Activated CD4-positive, alpha-beta memory T cell treated with anti-CD3 and anti-CD28 coated beads, Interleukin-2, amount 10 ng/mL, durations not matched to agents 7 days and 5 days (primary cell): ENCODE measurements at regions of chr7 and their contacts with region 1.

Region 1: GRCh38 chr7:149125863-149126661 is at the start of gene ZNF425:
- DNase-seq: peak; percentile 94
- H3K4me3 Mint-ChIP-seq: peak within 1 kb of the TSS; percentile 100
- H3K27ac Mint-ChIP-seq: peak within 1 kb of the TSS; percentile 99
- H3K4me1 Mint-ChIP-seq: peaks cover 24% of the 10 kb centered on the region
- H3K27me3 Mint-ChIP-seq: no peaks in the 10 kb centered on the region
- total RNA-seq, gene ZNF425: 1.1 TPM

Region 2: DNA sequence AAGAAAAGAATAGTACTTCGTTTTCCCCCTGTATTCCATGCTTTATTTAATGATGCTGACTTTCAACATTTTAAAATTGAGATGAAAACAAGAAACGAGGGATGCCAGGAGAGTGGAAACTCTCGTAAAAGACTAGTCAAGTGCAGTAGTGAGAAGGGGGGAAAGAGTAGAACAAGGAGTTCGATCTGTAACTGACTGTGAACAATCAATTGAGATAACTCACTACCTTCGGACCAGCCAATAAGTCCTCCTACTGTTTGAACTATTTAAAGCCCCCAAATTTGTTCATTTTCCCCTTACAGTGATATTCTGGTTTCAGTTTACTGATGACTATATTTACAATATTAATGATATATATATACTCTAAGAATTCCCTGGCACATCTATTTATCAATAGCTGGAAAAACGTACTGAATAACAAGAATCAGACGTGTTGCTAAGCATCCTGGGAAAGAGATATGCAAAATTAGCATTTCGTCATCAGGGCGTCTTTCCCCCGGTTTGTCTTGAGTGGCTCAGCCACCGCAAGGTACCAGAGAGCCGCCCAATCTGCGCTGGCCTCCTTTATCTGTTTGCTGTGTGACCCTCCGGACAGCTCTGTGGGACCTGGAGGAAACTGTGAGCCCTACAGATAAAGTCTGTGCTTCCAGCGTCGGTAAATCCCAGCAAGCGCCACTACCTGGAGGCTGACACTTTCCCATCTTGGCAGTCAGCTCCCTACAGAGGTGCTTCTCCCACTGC is 138.9 kb before region 1 on chr7:
- CTCF ChIA-PET with region 1: no interaction called
- POLR2A ChIA-PET with region 1: interaction called, 11 read pairs
- DNase-seq: peak; percentile 86
- H3K4me3 Mint-ChIP-seq: peak overlapping the region; percentile 95
- H3K27ac Mint-ChIP-seq: peak overlapping the region; percentile 86
- H3K4me1 Mint-ChIP-seq: peaks cover 48% of the 10 kb centered on the region
- H3K27me3 Mint-ChIP-seq: peaks cover 31% of the 10 kb centered on the region

Region 3: DNA sequence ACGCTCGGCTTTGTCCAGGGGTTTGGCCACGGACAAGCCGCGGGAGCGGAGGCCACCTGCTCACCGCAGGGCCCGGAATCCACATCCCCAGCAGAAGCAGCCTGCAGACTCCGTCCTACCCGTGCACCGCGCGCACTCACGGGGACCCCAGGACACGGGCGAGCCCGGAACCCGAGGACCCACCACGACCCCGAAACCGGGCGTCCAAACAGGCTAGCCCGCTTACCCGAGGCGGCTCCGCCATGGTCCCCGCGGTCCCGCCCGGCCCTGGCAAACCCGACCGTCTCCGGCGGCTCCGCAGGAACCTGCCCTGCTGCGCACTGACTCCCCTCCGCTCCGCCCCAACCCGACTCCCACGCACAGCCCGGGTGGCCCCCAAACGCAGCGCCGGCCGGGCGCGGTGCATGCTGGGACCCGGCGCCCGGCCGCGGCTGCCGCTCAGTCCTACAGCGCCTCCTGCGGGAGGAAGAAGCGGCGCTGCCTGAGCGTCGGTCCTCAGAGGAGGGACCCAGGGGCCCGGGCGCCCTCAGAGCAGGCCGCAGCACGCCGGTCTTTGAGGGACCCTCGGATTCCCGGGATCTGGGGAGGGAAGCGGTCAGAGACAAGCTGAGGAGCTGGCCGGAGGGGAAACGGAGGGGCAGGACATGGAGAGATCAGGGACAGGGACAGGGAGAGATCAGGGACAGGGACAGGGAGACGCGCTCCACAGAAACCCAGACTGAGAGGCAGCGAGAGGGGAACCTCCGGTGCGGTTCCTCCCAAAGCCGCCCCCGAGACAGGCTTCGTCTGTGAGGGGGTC is 35.5 kb before region 1 on chr7 and contains the start of gene ZNF786:
- CTCF ChIA-PET with region 1: interaction called, 10 read pairs
- POLR2A ChIA-PET with region 1: interaction called, 3 read pairs
- DNase-seq: peak; percentile 90
- H3K4me3 Mint-ChIP-seq: peak within 1 kb of the TSS; percentile 97
- H3K27ac Mint-ChIP-seq: peak within 1 kb of the TSS; percentile 98
- H3K4me1 Mint-ChIP-seq: peaks cover 20% of the 10 kb centered on the region
- H3K27me3 Mint-ChIP-seq: no peaks in the 10 kb centered on the region
- total RNA-seq, gene ZNF786: 6.0 to 7.0 TPM

Region 4: DNA sequence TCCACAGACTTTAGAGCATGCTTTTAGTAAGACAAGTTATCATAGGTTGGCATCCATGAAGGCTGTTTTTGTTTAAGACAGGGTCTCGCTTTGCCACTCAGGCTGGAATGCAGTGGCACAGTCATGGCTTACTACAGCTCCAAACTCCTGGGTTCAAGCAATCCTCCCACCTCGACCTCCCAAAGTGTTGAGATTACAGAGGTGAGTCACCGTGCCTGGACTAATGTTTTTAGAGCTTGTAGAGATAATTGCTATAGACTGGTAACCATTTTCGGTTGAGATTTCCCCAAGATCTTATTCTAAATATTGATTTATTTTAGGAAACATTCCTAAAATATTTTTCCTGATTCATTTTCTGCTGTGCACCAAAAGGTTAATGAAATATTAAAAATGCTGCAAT is 15.8 kb after region 1 on chr7:
- CTCF ChIA-PET with region 1: interaction called, 49 read pairs
- POLR2A ChIA-PET with region 1: interaction called, 83 read pairs
- DNase-seq: no peak
- H3K4me3 Mint-ChIP-seq: no peak overlapping the region
- H3K27ac Mint-ChIP-seq: no peak overlapping the region
- H3K4me1 Mint-ChIP-seq: peaks cover 15% of the 10 kb centered on the region
- H3K27me3 Mint-ChIP-seq: no peaks in the 10 kb centered on the region

Region 5: GRCh38 chr7:149171892-149172533 is 46.0 kb after region 1 on chr7:
- CTCF ChIA-PET with region 1: no interaction called
- POLR2A ChIA-PET with region 1: no interaction called
- DNase-seq: no peak
- H3K4me3 Mint-ChIP-seq: no peak overlapping the region
- H3K27ac Mint-ChIP-seq: no peak overlapping the region
- H3K4me1 Mint-ChIP-seq: peaks cover 5% of the 10 kb centered on the region
- H3K27me3 Mint-ChIP-seq: no peaks in the 10 kb centered on the region

Region 6: DNA sequence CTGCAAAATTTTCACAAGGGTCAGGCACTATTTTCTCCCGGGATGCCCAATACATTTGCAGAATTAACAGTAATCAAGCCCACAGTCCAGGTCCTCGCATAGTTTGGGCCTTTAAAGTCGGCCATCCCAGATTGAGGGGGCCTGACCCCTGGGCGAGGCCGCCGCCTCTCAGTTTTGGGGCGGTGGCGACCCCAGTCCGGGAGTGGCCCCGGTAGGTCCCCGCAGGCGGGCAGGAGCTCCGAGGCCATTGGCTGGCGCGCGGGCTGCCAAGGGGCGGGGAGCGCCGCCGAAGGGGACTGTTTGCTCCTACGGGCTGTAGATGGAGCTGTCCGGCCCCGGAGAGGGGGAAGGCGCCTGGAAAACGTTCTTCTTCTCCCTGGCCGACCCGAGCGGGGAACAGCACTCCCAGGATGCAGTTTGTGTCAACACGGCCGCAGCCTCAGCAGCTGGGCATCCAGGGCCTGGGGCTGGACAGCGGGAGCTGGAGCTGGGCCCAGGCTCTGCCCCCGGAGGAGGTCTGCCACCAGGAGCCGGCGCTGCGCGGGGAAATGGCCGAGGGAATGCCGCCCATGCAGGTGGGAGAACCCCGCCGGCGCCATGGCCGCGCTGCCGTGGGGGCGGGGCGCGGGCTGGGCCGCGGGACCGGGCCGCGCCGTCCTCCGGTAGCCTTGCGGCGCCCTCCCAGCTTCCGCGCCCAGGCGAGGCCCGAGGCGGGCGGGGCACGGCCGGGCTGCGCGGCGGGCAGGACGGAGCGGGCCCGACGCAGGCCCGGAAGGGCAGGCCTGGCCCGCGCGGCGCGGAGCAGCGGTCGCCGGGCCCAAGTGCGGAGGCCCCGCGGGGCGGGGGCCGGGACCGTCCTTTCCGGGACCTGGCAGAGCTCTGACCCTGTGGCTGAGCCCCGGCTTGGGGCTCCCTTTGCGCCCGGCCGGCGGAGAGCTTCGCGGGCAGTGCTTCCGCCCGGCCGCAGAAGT is 69.4 kb after region 1 on chr7 and contains the start of gene ZNF282:
- CTCF ChIA-PET with region 1: interaction called, 6 read pairs
- POLR2A ChIA-PET with region 1: interaction called, 45 read pairs
- DNase-seq: peak; percentile 81
- H3K4me3 Mint-ChIP-seq: peak within 1 kb of the TSS; percentile 96
- H3K27ac Mint-ChIP-seq: peak within 1 kb of the TSS; percentile 94
- H3K4me1 Mint-ChIP-seq: peaks cover 57% of the 10 kb centered on the region
- H3K27me3 Mint-ChIP-seq: no peaks in the 10 kb centered on the region
- total RNA-seq, gene ZNF282: 66.1 to 66.6 TPM

Region 7: GRCh38 chr7:149604521-149604920 is 478.5 kb after region 1 on chr7:
- CTCF ChIA-PET with region 1: no interaction called
- POLR2A ChIA-PET with region 1: no interaction called
- DNase-seq: no peak
- H3K4me3 Mint-ChIP-seq: no peak overlapping the region
- H3K27ac Mint-ChIP-seq: no peak overlapping the region
- H3K4me1 Mint-ChIP-seq: peaks cover 21% of the 10 kb centered on the region
- H3K27me3 Mint-ChIP-seq: peaks cover 21% of the 10 kb centered on the region